Activated CD8-positive, alpha-beta T cell treated with anti-CD3 and anti-CD28 coated beads, Interleukin-2, amount 10 ng/mL, durations not matched to agents 7 days and 5 days (primary cell): ENCODE measurements at regions of chr3 and their contacts with region 1.

Region 1: GRCh38 chr3:33787328-33788009 is 11.0 kb upstream of the PDCD6IP start:
- DNase-seq: peak; percentile 72
- ATAC-seq: peak; percentile 93
- H3K4me3 Mint-ChIP-seq: peak overlapping the region; percentile 6
- H3K27ac Mint-ChIP-seq: no peak overlapping the region
- H3K4me1 Mint-ChIP-seq: peaks cover 13% of the 10 kb centered on the region
- H3K27me3 Mint-ChIP-seq: peaks cover 24% of the 10 kb centered on the region

Region 2: DNA sequence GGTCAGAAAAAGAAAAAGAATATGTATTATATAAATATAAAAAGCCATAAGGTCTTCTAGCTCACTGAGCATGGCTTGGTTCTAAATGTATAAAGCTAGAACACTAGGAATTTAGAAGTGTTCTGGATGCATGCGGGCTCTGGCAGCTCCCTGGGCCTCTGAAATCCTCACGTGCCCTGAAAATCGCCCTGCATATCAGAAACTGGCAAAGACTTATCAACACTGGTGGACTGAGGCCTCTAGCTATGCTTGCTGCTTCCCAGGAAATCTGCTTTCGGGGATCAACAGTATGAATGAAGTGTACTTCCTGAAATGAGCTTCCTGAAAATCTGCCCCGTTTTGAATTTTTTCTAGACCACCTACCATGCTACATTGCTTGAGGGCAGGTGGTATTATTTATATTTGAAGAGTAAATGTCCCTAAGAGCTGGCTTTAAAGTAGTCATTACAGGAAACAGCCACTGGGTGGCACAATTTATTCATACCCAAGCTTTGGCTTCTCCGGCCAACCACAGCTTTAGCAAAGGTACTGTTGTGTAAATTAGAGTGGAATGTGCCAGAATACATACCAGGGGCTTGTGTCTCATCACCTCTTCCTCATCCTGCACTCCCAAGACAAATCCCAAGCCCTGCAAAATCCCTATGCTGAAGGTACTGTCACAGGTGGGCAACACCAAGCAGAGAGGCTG is 656.0 kb before region 1 on chr3:
- CTCF ChIA-PET with region 1: interaction called, 24 read pairs
- POLR2A ChIA-PET with region 1: interaction called, 3 read pairs
- DNase-seq: peak; percentile 60
- ATAC-seq: peak; percentile 64
- H3K4me3 Mint-ChIP-seq: no peak overlapping the region
- H3K27ac Mint-ChIP-seq: no peak overlapping the region
- H3K4me1 Mint-ChIP-seq: peaks cover 12% of the 10 kb centered on the region
- H3K27me3 Mint-ChIP-seq: no peaks in the 10 kb centered on the region

Region 3: DNA sequence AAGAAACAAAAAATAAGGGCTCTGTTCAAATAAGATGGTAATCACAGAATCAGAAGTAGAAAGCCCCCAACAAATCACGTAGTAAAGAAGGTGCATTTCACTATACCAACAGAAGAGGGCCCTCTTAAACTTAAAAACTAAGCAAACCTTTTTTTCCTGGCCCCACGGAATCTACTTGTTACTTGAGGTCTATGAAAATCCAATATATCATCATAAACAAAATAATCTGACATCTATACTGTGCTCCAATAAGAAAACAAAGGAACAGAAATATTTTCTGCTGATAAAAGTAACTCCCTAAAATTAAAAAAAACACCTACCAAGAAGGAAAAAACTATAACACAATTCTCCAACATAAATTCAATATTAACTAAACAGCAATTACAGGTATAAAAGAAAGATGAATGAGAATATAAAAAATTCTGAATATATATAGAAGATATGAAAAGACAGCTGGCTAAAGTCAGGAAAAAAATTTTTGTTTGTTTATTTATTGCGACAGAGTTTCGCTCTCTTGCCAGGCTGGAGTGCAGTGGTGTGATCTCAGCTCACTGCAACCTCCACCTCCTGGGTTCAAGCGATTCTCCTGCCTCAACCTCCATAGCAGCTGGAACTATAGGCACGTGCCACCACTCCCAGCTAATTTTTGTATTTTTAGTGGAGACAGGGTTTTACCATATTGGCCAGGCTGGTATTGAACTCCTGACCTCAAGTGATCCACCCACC is 151.2 kb before region 1 on chr3:
- CTCF ChIA-PET with region 1: interaction called, 23 read pairs
- POLR2A ChIA-PET with region 1: no interaction called
- DNase-seq: no peak
- ATAC-seq: no peak
- H3K4me3 Mint-ChIP-seq: no peak overlapping the region
- H3K27ac Mint-ChIP-seq: no peak overlapping the region
- H3K4me1 Mint-ChIP-seq: no peaks in the 10 kb centered on the region
- H3K27me3 Mint-ChIP-seq: no peaks in the 10 kb centered on the region

Region 4: GRCh38 chr3:33717866-33718594 is 69.4 kb before region 1 on chr3 and contains the start of gene CLASP2:
- CTCF ChIA-PET with region 1: interaction called, 13 read pairs
- POLR2A ChIA-PET with region 1: no interaction called
- DNase-seq: peak; percentile 87
- ATAC-seq: peak; percentile 91
- H3K4me3 Mint-ChIP-seq: peak within 1 kb of the TSS; percentile 91
- H3K27ac Mint-ChIP-seq: peak within 1 kb of the TSS; percentile 91
- H3K4me1 Mint-ChIP-seq: peaks cover 15% of the 10 kb centered on the region
- H3K27me3 Mint-ChIP-seq: peaks cover 2% of the 10 kb centered on the region
- total RNA-seq, gene CLASP2: 44.0 to 44.3 TPM

Region 5: GRCh38 chr3:33798411-33799201 is 11.1 kb after region 1 on chr3 and contains the start of gene PDCD6IP:
- CTCF ChIA-PET with region 1: interaction called, 60 read pairs
- POLR2A ChIA-PET with region 1: interaction called, 4 read pairs
- DNase-seq: peak; percentile 92
- ATAC-seq: peak; percentile 91
- H3K4me3 Mint-ChIP-seq: peak within 1 kb of the TSS; percentile 90
- H3K27ac Mint-ChIP-seq: peak within 1 kb of the TSS; percentile 89
- H3K4me1 Mint-ChIP-seq: peaks cover 56% of the 10 kb centered on the region
- H3K27me3 Mint-ChIP-seq: peaks cover 10% of the 10 kb centered on the region
- total RNA-seq, gene PDCD6IP: 166 to 175 TPM